Dendritic cell treated with granulocyte-macrophage colony-stimulating factor and Interleukin-4, amounts not matched to agents 40 ng/mL and 50 ng/mL, for 4 days (primary cell): ENCODE measurements at regions of chr7 and their contacts with region 1.

Region 1: DNA sequence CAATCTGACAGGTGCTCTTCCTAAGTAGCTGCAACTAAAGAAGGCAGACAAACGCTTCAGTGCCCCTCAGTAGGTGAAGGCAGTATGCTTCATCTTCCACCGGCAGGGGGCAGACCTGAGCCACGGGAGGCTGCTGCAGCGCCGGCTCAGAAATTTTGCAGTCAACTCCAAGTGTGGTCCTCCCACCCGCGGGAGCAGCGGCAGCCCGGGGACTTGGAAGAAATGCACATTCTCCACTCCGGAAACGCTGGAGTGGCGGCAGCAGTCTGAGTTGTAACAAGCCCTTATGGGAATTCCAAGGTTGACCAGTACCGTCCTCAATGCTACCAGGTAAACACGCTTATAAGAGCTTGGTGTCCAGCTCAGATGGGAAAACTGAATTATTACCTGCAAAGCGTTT is 3.4 kb downstream of the IGFBP3 start:
- H3K4me3 Mint-ChIP-seq: no peak overlapping the region
- H3K27ac Mint-ChIP-seq: no peak overlapping the region
- H3K4me1 Mint-ChIP-seq: no peaks in the 10 kb centered on the region
- H3K27me3 Mint-ChIP-seq: peaks cover 57% of the 10 kb centered on the region

Region 2: GRCh38 chr7:47088329-47089067 is 1170.8 kb after region 1 on chr7:
- intact Hi-C with region 1: loop called (anchors 5 kb)
- H3K4me3 Mint-ChIP-seq: no peak overlapping the region
- H3K27ac Mint-ChIP-seq: no peak overlapping the region
- H3K4me1 Mint-ChIP-seq: no peaks in the 10 kb centered on the region
- H3K27me3 Mint-ChIP-seq: peaks cover 4% of the 10 kb centered on the region

Region 3: GRCh38 chr7:47179812-47180515 is 1262.3 kb after region 1 on chr7:
- intact Hi-C with region 1: loop called (anchors 1 kb)
- H3K4me3 Mint-ChIP-seq: no peak overlapping the region
- H3K27ac Mint-ChIP-seq: no peak overlapping the region
- H3K4me1 Mint-ChIP-seq: no peaks in the 10 kb centered on the region
- H3K27me3 Mint-ChIP-seq: peaks cover 6% of the 10 kb centered on the region

Region 4: DNA sequence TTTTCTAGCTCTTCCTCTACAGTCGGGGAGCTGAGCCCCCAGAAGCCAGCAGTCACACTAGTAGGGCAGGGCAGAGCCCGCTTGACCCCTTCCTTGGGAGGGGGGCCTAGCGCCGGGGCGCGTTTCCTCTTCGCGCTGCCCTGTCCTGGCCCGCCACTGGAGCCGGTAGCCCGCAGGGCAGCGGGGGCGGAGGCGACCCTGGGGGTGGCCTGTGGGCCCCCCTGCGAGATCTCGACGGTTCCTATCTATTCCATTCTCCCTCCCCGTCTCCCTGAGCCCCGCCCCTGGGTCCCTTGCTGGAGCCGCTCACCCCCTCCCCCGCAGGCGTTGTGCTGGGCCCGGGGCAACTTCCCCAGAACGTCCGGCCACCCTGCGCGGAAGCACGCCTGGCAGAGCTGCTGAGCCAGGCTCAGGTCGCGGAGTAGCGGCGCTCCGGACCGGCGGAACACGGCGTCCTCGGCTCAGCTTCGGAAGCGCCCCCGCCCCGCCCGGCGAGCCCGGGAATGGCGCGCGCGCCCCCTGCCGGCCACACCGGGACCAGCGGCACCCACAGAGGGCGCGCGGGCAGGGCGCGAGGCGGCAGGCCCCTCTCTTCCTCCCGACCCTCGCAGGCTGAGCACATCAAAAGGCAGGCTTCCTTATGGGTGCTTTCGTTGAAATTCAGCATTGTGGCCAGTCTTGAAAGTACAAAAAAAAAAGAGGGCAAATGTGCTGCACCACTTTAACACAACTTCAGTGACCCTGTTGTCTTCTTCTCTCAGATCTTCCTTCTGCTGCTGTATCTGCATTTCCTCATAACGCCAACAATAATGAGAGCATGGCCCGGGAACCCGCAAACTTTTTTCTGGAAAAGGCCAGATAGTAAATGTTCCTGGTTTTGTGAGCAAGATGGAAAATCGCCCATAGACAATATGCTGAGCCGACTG is 1336.7 kb after region 1 on chr7:
- intact Hi-C with region 1: loop called (anchors 2 kb)
- H3K4me3 Mint-ChIP-seq: peak overlapping the region; percentile 74
- H3K27ac Mint-ChIP-seq: peak overlapping the region; percentile 51
- H3K4me1 Mint-ChIP-seq: peaks cover 21% of the 10 kb centered on the region
- H3K27me3 Mint-ChIP-seq: peaks cover 15% of the 10 kb centered on the region